CD8-positive, alpha-beta T cell (primary cell): ENCODE measurements at regions of chr19 and their contacts with region 1.

Region 1: DNA sequence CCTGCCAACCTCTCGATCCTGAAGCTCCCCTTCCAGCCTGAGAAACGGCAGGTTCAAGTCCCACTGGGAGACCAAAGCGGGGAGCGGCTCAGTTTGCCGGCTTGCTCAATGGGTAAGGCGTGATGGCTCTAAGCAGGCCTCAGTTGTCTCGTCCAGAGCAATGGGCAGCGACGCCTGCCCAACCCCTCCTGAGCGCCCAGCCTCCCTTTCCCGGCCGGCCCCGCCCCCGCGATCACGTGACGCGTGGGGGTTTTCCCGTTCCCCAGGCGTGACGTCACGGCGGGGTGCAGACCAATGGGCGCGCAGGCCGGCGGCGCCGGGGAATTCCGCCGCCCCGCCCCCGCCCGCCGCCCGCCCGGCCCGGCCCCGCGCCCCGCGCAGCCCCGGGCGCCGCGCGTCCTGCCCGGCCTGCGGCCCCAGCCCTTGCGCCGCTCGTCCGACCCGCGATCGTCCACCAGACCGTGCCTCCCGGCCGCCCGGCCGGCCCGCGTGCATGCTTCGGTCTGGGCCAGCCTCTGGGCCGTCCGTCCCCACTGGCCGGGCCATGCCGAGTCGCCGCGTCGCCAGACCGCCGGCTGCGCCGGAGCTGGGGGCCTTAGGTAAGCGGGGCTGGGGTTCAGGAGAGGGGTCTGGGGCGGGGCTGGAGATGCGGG is at the start of gene RELB:
- DNase-seq: peak; percentile 92 to 98 (median 95)
- ATAC-seq: peak; percentile 49
- H3K4me3 ChIP-seq: peak within 1 kb of the TSS; percentile 58 to 98
- H3K4me3 Mint-ChIP-seq: peak within 1 kb of the TSS; percentile 96
- H3K27ac ChIP-seq: peak within 1 kb of the TSS; percentile 98 to 100
- H3K27ac Mint-ChIP-seq: peak within 1 kb of the TSS; percentile 100
- H3K4me1 ChIP-seq: peaks cover 10% of the 10 kb centered on the region
- H3K4me1 Mint-ChIP-seq: peaks cover 16% of the 10 kb centered on the region
- H3K27me3 ChIP-seq: no peaks in the 10 kb centered on the region
- H3K27me3 Mint-ChIP-seq: no peaks in the 10 kb centered on the region
- CTCF ChIP-seq: no peak
- total RNA-seq, gene RELB: 168 to 179 TPM

Region 2: DNA sequence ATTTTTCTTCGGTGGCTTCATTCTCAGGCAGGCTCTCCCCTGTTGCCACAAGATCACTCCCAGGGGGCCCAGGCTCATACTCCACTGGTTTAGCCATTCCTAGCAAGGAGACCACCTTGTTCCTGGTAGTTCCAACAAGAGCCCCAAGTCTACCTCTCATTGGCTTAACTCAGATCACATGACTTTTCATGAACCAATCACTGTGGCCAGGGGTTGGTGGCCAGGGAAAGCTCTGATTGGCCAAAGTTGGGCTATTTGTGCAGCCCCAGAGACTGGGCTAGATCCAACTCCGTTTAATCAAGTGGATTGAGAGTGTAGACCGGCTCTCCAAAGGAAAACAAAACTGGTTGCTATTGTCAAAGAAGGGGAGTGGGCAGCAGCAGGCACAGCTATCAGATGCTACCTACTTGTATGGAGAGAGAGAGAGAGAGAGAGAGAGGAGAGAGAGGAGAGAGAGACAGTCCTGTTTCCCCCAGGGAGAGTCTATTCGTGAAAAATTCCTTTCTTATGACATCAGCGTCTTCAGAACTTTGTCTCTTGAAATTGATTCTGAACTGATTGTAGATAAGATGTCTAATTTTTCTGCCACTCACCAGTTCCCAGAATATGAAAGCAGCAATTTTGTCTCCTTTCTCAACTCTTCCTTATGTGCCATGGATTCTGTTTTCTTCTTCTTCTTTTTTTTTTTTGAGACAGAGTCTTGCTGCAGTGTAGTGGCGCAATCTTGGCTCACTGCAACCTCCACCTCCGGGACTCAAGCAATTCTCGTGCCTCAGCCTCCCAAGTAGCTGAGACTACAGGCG is 324.0 kb before region 1 on chr19:
- CTCF ChIA-PET with region 1: no interaction called
- POLR2A ChIA-PET with region 1: no interaction called
- intact Hi-C with region 1: no loop called
- DNase-seq: no peak
- ATAC-seq: no peak
- H3K4me3 ChIP-seq: no peak overlapping the region
- H3K4me3 Mint-ChIP-seq: no peak overlapping the region
- H3K27ac ChIP-seq: no peak overlapping the region
- H3K27ac Mint-ChIP-seq: no peak overlapping the region
- H3K4me1 ChIP-seq: no peaks in the 10 kb centered on the region
- H3K4me1 Mint-ChIP-seq: no peaks in the 10 kb centered on the region
- H3K27me3 ChIP-seq: no peaks in the 10 kb centered on the region
- H3K27me3 Mint-ChIP-seq: peaks cover 2% of the 10 kb centered on the region
- CTCF ChIP-seq: no peak

Region 3: GRCh38 chr19:44752816-44753618 is 248.2 kb before region 1 on chr19:
- CTCF ChIA-PET with region 1: no interaction called
- POLR2A ChIA-PET with region 1: no interaction called
- intact Hi-C with region 1: loop called in 1 of 2 experiments (anchors 5 kb)
- DNase-seq: peak; percentile 88 to 99 (median 93)
- ATAC-seq: peak; percentile 76
- H3K4me3 ChIP-seq: peak overlapping the region; percentile 13 to 68
- H3K4me3 Mint-ChIP-seq: peak overlapping the region; percentile 95
- H3K27ac ChIP-seq: peak overlapping the region; percentile 83 to 95
- H3K27ac Mint-ChIP-seq: peak overlapping the region; percentile 97
- H3K4me1 ChIP-seq: peaks cover 64% of the 10 kb centered on the region
- H3K4me1 Mint-ChIP-seq: peaks cover 65% of the 10 kb centered on the region
- H3K27me3 ChIP-seq: no peaks in the 10 kb centered on the region
- H3K27me3 Mint-ChIP-seq: no peaks in the 10 kb centered on the region
- CTCF ChIP-seq: no peak

Region 4: GRCh38 chr19:45016388-45017319 is 15.4 kb after region 1 on chr19:
- CTCF ChIA-PET with region 1: no interaction called
- POLR2A ChIA-PET with region 1: no interaction called
- intact Hi-C with region 1: loop called in 1 of 2 experiments (anchors 1 kb)
- DNase-seq: peak; percentile 54 to 95 (median 73)
- ATAC-seq: peak; percentile 85
- H3K4me3 ChIP-seq: peak overlapping the region in 1 of 2 experiments; percentile 9
- H3K4me3 Mint-ChIP-seq: peak overlapping the region; percentile 42
- H3K27ac ChIP-seq: peak overlapping the region; percentile 44 to 82
- H3K27ac Mint-ChIP-seq: peak overlapping the region; percentile 87
- H3K4me1 ChIP-seq: peaks cover 3% of the 10 kb centered on the region
- H3K4me1 Mint-ChIP-seq: peaks cover 13% of the 10 kb centered on the region
- H3K27me3 ChIP-seq: no peaks in the 10 kb centered on the region
- H3K27me3 Mint-ChIP-seq: no peaks in the 10 kb centered on the region
- CTCF ChIP-seq: peak; percentile 68

Region 5: GRCh38 chr19:45038931-45039893 is 38.0 kb after region 1 on chr19 and contains the start of gene CLASRP:
- CTCF ChIA-PET with region 1: interaction called, 3 read pairs
- POLR2A ChIA-PET with region 1: interaction called, 4 read pairs
- intact Hi-C with region 1: loop called (anchors 1 kb)
- DNase-seq: peak; percentile 73 to 94 (median 89)
- ATAC-seq: peak; percentile 89
- H3K4me3 ChIP-seq: peak within 1 kb of the TSS; percentile 86 to 89
- H3K4me3 Mint-ChIP-seq: peak within 1 kb of the TSS; percentile 93
- H3K27ac ChIP-seq: peak within 1 kb of the TSS; percentile 92 to 96
- H3K27ac Mint-ChIP-seq: peak within 1 kb of the TSS; percentile 90
- H3K4me1 ChIP-seq: peaks cover 23% of the 10 kb centered on the region
- H3K4me1 Mint-ChIP-seq: peaks cover 32% of the 10 kb centered on the region
- H3K27me3 ChIP-seq: no peaks in the 10 kb centered on the region
- H3K27me3 Mint-ChIP-seq: no peaks in the 10 kb centered on the region
- CTCF ChIP-seq: no peak
- total RNA-seq, gene CLASRP: 144 to 153 TPM

Region 6: DNA sequence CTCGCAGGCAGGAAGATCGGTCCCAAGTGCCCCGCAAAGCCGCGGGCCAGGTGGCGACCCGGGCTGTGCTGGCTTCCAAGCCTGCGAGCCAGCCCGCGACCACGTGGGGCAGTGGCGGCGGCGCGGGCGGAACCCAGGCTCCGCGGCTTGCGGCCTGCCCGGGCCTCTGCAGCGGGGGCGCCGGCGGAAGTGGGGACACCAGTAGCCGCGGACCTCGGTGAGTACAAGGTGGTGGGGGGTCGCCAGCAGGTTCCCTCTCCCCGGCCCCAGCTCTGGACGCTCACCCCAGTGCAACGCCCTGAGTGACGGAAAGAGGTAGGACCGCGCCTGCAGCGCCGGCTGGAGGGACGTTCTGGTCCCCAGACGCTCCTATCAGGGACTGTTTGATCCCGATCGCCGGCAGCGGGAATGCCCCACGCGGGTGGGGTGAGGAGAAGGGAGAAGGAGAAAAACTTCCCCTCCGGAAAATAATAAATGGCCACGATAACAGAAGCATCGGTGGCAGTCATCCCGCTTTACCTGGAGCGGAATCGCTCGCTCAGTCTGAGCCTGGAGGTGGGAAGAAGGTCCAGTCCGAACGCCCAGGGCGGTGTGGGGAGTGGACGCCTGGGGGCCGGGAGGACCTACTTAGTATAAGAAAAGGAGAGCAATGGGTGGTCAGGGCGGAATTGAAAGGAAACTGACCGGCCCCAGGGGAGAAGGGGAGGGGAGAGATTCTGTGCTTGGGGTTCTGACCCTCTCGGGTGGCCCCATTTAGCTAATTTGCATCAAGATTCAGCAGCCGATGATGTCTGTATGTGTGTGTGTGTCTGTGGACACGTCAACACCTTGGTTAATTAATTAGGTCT is 78.1 kb after region 1 on chr19 and contains the start of gene GEMIN7:
- CTCF ChIA-PET with region 1: no interaction called
- POLR2A ChIA-PET with region 1: interaction called, 5 read pairs
- intact Hi-C with region 1: loop called in 1 of 2 experiments (anchors 5 kb)
- DNase-seq: peak; percentile 64 to 89 (median 76)
- ATAC-seq: peak; percentile 70
- H3K4me3 ChIP-seq: peak within 1 kb of the TSS; percentile 95 to 98
- H3K4me3 Mint-ChIP-seq: peak within 1 kb of the TSS; percentile 90
- H3K27ac ChIP-seq: peak within 1 kb of the TSS; percentile 77 to 78
- H3K27ac Mint-ChIP-seq: peak within 1 kb of the TSS; percentile 81
- H3K4me1 ChIP-seq: peaks cover 46% of the 10 kb centered on the region
- H3K4me1 Mint-ChIP-seq: peaks cover 45% of the 10 kb centered on the region
- H3K27me3 ChIP-seq: no peaks in the 10 kb centered on the region
- H3K27me3 Mint-ChIP-seq: no peaks in the 10 kb centered on the region
- CTCF ChIP-seq: no peak
- total RNA-seq, gene GEMIN7: 7.2 to 7.7 TPM

Region 7: DNA sequence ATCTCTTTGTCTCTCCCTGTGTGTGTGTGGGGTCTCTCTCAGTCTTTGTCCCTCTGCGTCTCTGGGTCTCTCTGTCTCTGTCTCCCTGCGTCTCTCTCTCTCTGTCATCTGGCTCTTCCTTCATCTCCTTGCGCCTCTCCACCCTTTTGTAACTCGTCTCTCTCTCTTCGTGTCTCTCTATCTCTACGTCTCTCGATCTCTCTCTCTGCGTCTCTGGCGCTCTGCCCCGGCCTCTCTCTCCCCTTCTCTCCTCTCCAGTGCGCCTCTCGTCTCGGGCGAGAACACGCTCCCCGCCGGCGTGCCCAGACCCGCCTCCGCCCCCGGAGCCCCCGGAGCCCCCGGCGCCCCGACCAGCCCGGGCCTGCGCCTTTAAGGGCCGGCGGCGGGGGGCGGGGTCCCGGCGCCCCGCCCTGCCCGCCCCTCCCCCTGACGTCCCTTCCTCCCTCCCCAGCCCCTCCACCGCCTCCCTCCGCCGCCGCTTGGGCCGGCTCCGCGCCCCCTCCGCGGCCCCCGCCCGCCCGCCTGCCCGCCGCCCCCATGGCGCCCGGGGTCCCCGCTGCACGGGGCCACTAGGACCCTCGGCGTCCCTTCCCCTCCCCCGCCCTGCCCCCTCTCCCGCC is 249.7 kb after region 1 on chr19 and contains the start of gene MARK4:
- CTCF ChIA-PET with region 1: no interaction called
- POLR2A ChIA-PET with region 1: no interaction called
- intact Hi-C with region 1: loop called in 1 of 2 experiments (anchors 5 kb)
- DNase-seq: peak; percentile 17 to 83 (median 55)
- ATAC-seq: peak; percentile 69
- H3K4me3 ChIP-seq: peak within 1 kb of the TSS; percentile 66 to 68
- H3K4me3 Mint-ChIP-seq: peak within 1 kb of the TSS; percentile 93
- H3K27ac ChIP-seq: peak within 1 kb of the TSS; percentile 20 to 67
- H3K27ac Mint-ChIP-seq: peak within 1 kb of the TSS; percentile 72
- H3K4me1 ChIP-seq: peaks cover 39% of the 10 kb centered on the region
- H3K4me1 Mint-ChIP-seq: peaks cover 38% of the 10 kb centered on the region
- H3K27me3 ChIP-seq: no peaks in the 10 kb centered on the region
- H3K27me3 Mint-ChIP-seq: no peaks in the 10 kb centered on the region
- CTCF ChIP-seq: no peak
- total RNA-seq, gene MARK4: 17.2 to 19.9 TPM

Region 8: DNA sequence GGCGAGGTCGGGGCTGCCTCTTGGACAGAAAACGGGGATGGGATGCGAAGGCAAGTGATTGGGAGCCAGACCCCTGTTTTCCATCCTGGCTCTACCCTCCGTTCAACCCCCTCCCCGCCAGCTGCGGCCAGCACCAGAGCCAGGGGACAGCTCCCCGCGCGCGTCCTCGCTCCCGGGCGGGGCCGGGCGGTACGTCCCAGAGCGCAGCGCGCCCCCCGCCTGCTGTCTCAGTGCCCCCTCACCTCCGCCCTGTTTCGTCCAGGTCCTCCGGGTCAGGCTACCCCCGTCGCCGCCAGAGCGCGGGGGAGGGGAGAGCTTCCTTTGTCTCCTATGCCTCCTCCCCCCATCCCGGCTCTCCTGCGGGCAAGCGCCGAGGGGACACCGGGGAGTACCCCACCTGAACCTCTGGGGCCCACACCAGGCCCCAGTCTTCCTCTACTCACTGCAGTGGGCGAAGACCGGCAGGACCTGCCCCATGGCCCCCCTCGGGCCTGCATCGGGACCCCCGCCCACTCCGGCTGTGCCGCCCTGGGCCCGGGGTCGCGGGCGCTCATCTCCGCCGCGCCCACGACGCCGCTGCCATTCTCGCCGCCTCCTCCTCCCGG is 495.2 kb after region 1 on chr19:
- CTCF ChIA-PET with region 1: no interaction called
- POLR2A ChIA-PET with region 1: no interaction called
- intact Hi-C with region 1: loop called in 1 of 2 experiments (anchors 5 kb)
- DNase-seq: peak in 6 of 9 experiments; percentile 37 to 68 (median 58)
- ATAC-seq: peak; percentile 16
- H3K4me3 ChIP-seq: peak overlapping the region; percentile 57 to 75
- H3K4me3 Mint-ChIP-seq: peak overlapping the region; percentile 74
- H3K27ac ChIP-seq: no peak overlapping the region
- H3K27ac Mint-ChIP-seq: no peak overlapping the region
- H3K4me1 ChIP-seq: peaks cover 45% of the 10 kb centered on the region
- H3K4me1 Mint-ChIP-seq: peaks cover 37% of the 10 kb centered on the region
- H3K27me3 ChIP-seq: peaks cover 0 to 4% of the 10 kb centered on the region in 2 experiments
- H3K27me3 Mint-ChIP-seq: peaks cover 21% of the 10 kb centered on the region
- CTCF ChIP-seq: no peak